B cell (primary cell): ENCODE measurements at regions of chr14 and their contacts with region 1.

Region 1: DNA sequence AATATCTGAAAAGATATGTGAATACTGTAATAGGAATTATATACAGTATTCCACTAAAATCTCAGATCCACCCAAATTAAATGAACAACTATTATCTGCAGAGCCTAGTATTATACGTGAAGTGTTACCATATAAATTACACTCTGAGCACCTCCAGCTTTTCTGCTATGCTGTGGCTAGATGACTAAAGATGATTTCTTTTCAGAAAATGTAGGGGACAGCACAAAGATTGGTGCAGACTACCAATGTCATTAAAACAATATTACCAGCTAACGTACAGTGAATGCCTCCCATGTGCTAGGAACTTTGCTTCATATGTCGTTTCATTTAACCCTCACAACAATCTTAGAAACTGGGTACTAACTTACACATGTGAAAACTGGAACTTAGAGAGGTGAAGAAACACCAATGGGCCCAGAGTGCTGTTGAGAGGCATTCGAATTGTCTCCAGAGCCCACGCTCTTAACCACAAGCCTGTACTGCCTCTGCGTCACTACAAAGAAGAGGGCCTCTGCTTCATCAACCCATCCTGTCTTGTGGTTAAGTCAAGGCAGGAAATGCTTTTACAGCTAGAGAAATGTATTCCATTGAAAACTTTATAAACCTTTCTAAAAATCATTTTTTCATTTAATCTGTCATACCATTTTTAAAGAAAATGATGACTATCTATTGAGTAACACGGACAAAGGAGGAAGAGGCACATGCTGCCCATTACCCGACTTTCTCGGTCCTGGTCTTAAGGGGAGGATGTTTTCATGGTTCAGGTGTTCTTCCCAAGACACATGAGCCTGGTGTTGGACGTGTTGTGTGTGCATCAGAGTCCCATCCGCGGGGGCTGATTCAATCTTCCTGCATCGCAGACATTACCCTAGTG is 1.3 kb downstream of the GPR65 start:
- DNase-seq: peak; percentile 83
- ATAC-seq: peak; percentile 90
- H3K4me3 ChIP-seq: peak overlapping the region; percentile 49 to 94 (median 62)
- H3K4me3 Mint-ChIP-seq: peak overlapping the region; percentile 83
- H3K27ac ChIP-seq: peak overlapping the region; percentile 78 to 90
- H3K27ac Mint-ChIP-seq: peak overlapping the region; percentile 95
- H3K4me1 ChIP-seq: peaks cover 40 to 50% of the 10 kb centered on the region in 2 donors
- H3K4me1 Mint-ChIP-seq: peaks cover 75% of the 10 kb centered on the region
- H3K27me3 ChIP-seq: no peaks in the 10 kb centered on the region
- H3K27me3 Mint-ChIP-seq: no peaks in the 10 kb centered on the region
- CTCF ChIP-seq: no peak

Region 2: DNA sequence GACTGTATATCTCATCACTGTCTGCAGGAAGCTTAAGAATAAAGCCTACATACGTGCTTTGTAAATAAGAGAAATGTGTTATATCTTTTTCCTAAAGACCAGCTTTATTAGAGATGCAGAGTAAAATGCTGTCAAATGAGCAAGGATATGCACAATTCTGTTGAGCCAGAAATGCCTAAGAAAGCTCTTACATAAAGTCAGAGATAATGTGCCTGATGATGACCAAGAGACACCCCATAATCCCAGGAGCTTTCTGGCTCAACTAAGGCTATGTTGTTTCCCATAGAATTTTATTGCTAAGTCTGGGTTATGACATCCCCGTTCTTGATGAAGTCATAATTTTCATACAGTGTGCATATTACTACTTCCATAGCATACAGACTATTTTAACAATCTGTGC is 223.1 kb before region 1 on chr14:
- CTCF ChIA-PET with region 1: no interaction called
- POLR2A ChIA-PET with region 1: no interaction called
- intact Hi-C with region 1: no loop called
- DNase-seq: no peak
- ATAC-seq: no peak
- H3K4me3 ChIP-seq: no peak overlapping the region
- H3K4me3 Mint-ChIP-seq: no peak overlapping the region
- H3K27ac ChIP-seq: no peak overlapping the region
- H3K27ac Mint-ChIP-seq: no peak overlapping the region
- H3K4me1 ChIP-seq: no peaks in the 10 kb centered on the region
- H3K4me1 Mint-ChIP-seq: no peaks in the 10 kb centered on the region
- H3K27me3 ChIP-seq: no peaks in the 10 kb centered on the region
- H3K27me3 Mint-ChIP-seq: no peaks in the 10 kb centered on the region
- CTCF ChIP-seq: no peak

Region 3: GRCh38 chr14:87992718-87993628 is 13.2 kb before region 1 on chr14 and contains the start of gene GALC:
- CTCF ChIA-PET with region 1: interaction called, 22 read pairs
- POLR2A ChIA-PET with region 1: interaction called, 12 read pairs
- intact Hi-C with region 1: loop called (anchors 1 kb)
- DNase-seq: peak; percentile 97
- ATAC-seq: peak; percentile 82
- H3K4me3 ChIP-seq: peak within 1 kb of the TSS; percentile 47 to 74 (median 66)
- H3K4me3 Mint-ChIP-seq: peak within 1 kb of the TSS; percentile 87
- H3K27ac ChIP-seq: peak within 1 kb of the TSS; percentile 95 to 97
- H3K27ac Mint-ChIP-seq: peak within 1 kb of the TSS; percentile 99
- H3K4me1 ChIP-seq: peaks cover 15 to 29% of the 10 kb centered on the region in 2 donors
- H3K4me1 Mint-ChIP-seq: peaks cover 38% of the 10 kb centered on the region
- H3K27me3 ChIP-seq: no peaks in the 10 kb centered on the region
- H3K27me3 Mint-ChIP-seq: no peaks in the 10 kb centered on the region
- CTCF ChIP-seq: no peak
- total RNA-seq, gene GALC: 15.6 and 17.8 TPM in 2 replicates

Region 4: DNA sequence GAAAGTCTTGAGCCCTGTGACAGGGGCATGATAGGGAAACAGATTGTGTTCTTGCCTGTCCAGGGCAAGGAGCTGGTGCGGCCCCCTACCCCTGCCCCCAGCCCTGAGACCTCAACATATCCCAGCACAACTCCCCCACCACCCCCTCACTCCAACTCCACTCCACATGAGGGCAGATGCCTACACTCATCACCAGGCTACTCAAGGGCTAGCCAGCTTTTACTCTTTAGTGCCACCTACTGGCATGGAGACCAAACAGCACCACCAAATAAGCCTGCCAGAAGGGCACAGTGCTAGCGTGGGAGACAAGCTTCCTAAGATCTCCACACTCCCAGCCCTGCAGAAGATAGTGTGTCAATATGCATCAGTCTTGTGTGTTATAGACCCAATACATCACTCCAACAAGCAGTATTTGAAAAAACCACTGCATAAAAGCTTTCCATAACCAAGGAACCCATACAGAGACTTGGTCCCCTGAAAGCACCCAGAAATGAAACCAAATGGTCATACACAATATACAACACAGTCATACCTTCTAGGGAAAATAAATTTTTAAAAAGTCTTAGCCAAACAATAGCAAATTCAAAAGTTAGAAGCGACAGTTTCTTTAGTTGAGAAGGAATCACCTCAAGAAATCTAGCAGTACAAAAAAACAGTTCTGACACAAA is 162.4 kb after region 1 on chr14:
- CTCF ChIA-PET with region 1: interaction called, 4 read pairs
- POLR2A ChIA-PET with region 1: interaction called, 11 read pairs
- intact Hi-C with region 1: no loop called
- DNase-seq: peak; percentile 66
- ATAC-seq: peak; percentile 75
- H3K4me3 ChIP-seq: no peak overlapping the region
- H3K4me3 Mint-ChIP-seq: no peak overlapping the region
- H3K27ac ChIP-seq: no peak overlapping the region
- H3K27ac Mint-ChIP-seq: no peak overlapping the region
- H3K4me1 ChIP-seq: no peaks in the 10 kb centered on the region
- H3K4me1 Mint-ChIP-seq: no peaks in the 10 kb centered on the region
- H3K27me3 ChIP-seq: peaks cover 0 to 21% (median 2%) of the 10 kb centered on the region in 4 experiments
- H3K27me3 Mint-ChIP-seq: peaks cover 42% of the 10 kb centered on the region
- CTCF ChIP-seq: peak; percentile 76

Region 5: GRCh38 chr14:88209273-88209672 is 203.1 kb after region 1 on chr14:
- CTCF ChIA-PET with region 1: no interaction called
- POLR2A ChIA-PET with region 1: no interaction called
- intact Hi-C with region 1: loop called (anchors 1 kb)
- DNase-seq: peak; percentile 58
- ATAC-seq: peak; percentile 90
- H3K4me3 ChIP-seq: peak overlapping the region in 2 of 5 experiments; percentile 1 to 2
- H3K4me3 Mint-ChIP-seq: peak overlapping the region; percentile 81
- H3K27ac ChIP-seq: no peak overlapping the region
- H3K27ac Mint-ChIP-seq: peak overlapping the region; percentile 85
- H3K4me1 ChIP-seq: no peaks in the 10 kb centered on the region
- H3K4me1 Mint-ChIP-seq: peaks cover 39% of the 10 kb centered on the region
- H3K27me3 ChIP-seq: peaks cover 0 to 5% (median 0%) of the 10 kb centered on the region in 4 experiments
- H3K27me3 Mint-ChIP-seq: peaks cover 8% of the 10 kb centered on the region
- CTCF ChIP-seq: no peak

Region 6: DNA sequence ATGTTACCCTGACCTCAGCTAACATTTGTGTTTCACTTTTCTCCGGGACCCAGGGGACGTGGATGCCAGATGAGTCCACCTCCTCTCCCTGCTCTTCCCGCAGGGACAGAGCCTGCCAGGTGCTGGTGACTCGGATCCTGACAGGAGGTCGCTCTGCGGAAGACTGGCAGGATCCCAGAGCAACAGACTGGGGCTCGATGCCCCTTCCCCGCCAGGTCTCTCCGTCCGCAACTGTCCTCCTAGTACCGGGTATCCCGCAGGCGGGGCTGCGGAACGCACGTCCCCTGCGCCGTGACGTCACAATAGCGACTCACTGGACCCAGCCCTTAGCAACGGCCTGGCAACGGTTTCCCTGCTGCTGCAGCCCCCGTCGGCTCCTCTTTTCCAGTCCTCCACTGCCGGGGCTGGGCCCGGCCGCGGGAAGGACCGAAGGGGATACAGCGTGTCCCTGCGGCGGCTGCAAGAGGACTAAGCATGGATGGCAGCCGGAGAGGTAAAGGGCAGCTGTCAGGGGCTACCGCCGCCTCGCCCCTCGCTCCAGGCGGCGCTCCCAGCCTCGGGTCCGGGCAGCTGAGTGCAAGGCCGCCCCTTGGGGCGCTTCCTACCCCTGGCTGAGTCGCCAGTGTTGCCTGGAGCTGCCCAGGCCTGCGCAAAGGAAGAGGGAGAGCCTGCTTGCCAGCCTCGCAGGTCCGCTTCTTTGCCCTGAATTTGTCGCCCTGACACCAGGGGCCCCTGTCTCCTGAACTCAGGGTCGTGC is 379.3 kb after region 1 on chr14 and contains the start of gene SPATA7:
- CTCF ChIA-PET with region 1: no interaction called
- POLR2A ChIA-PET with region 1: no interaction called
- intact Hi-C with region 1: loop called (anchors 10 kb)
- DNase-seq: peak; percentile 82
- ATAC-seq: peak; percentile 92
- H3K4me3 ChIP-seq: peak within 1 kb of the TSS; percentile 81 to 95 (median 93)
- H3K4me3 Mint-ChIP-seq: peak within 1 kb of the TSS; percentile 98
- H3K27ac ChIP-seq: peak within 1 kb of the TSS; percentile 38 to 67
- H3K27ac Mint-ChIP-seq: peak within 1 kb of the TSS; percentile 78
- H3K4me1 ChIP-seq: peaks cover 6 to 13% of the 10 kb centered on the region in 2 donors
- H3K4me1 Mint-ChIP-seq: peaks cover 20% of the 10 kb centered on the region
- H3K27me3 ChIP-seq: peaks cover 0 to 4% (median 0%) of the 10 kb centered on the region in 4 experiments
- H3K27me3 Mint-ChIP-seq: peaks cover 3% of the 10 kb centered on the region
- CTCF ChIP-seq: no peak
- total RNA-seq, gene SPATA7: 3.2 and 3.3 TPM in 2 replicates

Region 7: GRCh38 chr14:88792572-88793258 is 786.5 kb after region 1 on chr14 and contains the start of gene EML5:
- CTCF ChIA-PET with region 1: no interaction called
- POLR2A ChIA-PET with region 1: no interaction called
- intact Hi-C with region 1: loop called (anchors 10 kb)
- DNase-seq: peak; percentile 93
- ATAC-seq: peak; percentile 84
- H3K4me3 ChIP-seq: peak within 1 kb of the TSS; percentile 68 to 77 (median 74)
- H3K4me3 Mint-ChIP-seq: peak within 1 kb of the TSS; percentile 92
- H3K27ac ChIP-seq: peak within 1 kb of the TSS; percentile 68 to 83
- H3K27ac Mint-ChIP-seq: peak within 1 kb of the TSS; percentile 89
- H3K4me1 ChIP-seq: peaks cover 8 to 14% of the 10 kb centered on the region in 2 donors
- H3K4me1 Mint-ChIP-seq: peaks cover 19% of the 10 kb centered on the region
- H3K27me3 ChIP-seq: peaks cover 0 to 4% (median 2%) of the 10 kb centered on the region in 4 experiments
- H3K27me3 Mint-ChIP-seq: no peaks in the 10 kb centered on the region
- CTCF ChIP-seq: peak; percentile 17
- total RNA-seq, gene EML5: 6.5 and 6.9 TPM in 2 replicates